Breast epithelium (tissue), 4 donors: ENCODE measurements at regions of chr11 and their contacts with region 1.

Region 1: GRCh38 chr11:90447618-90448017 is 224.8 kb upstream of the CHORDC1 start:
- DNase-seq: no peak
- H3K4me3 ChIP-seq: no peak overlapping the region
- H3K27ac ChIP-seq: no peak overlapping the region
- H3K4me1 ChIP-seq: no peaks in the 10 kb centered on the region
- H3K27me3 ChIP-seq: no peaks in the 10 kb centered on the region
- CTCF ChIP-seq: no peak
- POLR2A ChIP-seq: no peak

Region 2: DNA sequence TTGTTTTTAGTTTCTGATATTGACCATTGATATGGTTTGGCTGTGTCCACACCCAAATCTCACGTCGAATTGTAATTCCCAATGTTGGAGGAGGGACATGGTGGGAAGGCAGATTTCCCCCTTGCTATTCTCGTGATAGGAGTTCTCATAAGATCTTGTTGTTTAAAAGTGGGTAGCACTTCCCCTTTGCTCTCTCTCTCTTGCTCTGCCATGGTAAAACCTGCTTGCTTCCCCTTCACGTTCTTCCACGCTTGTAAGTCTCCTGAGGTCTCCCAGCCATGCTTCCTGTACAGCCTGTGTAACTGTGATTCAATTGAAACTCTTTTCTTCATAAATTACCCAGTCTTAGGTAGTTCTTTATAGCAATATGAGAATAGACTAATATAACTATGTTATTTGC is 21.2 kb before region 1 on chr11:
- intact Hi-C with region 1: loop called (anchors 2 kb)
- DNase-seq: no peak
- H3K4me3 ChIP-seq: no peak overlapping the region
- H3K27ac ChIP-seq: no peak overlapping the region
- H3K4me1 ChIP-seq: no peaks in the 10 kb centered on the region
- H3K27me3 ChIP-seq: no peaks in the 10 kb centered on the region
- CTCF ChIP-seq: no peak
- POLR2A ChIP-seq: no peak